HepG2 (cell line): ENCODE measurements at regions of chr19 and their contacts with region 1.

Region 1: GRCh38 chr19:29714953-29715700 is at the start of gene C19orf12:
- DNase-seq: peak; percentile 18
- ATAC-seq: peak; percentile 81
- H3K4me3 ChIP-seq: peak within 1 kb of the TSS; percentile 77 to 96 (median 85)
- H3K27ac ChIP-seq: peak within 1 kb of the TSS; percentile 87
- H3K4me1 ChIP-seq: peaks cover 54% of the 10 kb centered on the region
- H3K27me3 ChIP-seq: no peaks in the 10 kb centered on the region
- CTCF ChIP-seq: no peak
- EP300 ChIP-seq: no peak
- POLR2A ChIP-seq: peak; percentile 70 to 80
- RAD21 ChIP-seq: no peak
- total RNA-seq, gene C19orf12: 34.4 and 34.8 TPM in 2 replicates

Region 2: GRCh38 chr19:29704562-29705558 is 10.3 kb before region 1 on chr19:
- CTCF ChIA-PET with region 1: no interaction called
- POLR2A ChIA-PET with region 1: interaction called, 8 read pairs
- in situ Hi-C with region 1: no loop called
- intact Hi-C with region 1: loop called (anchors 1 kb)
- DNase-seq: no peak
- ATAC-seq: no peak
- H3K4me3 ChIP-seq: no peak overlapping the region
- H3K27ac ChIP-seq: no peak overlapping the region
- H3K4me1 ChIP-seq: peaks cover 40% of the 10 kb centered on the region
- H3K27me3 ChIP-seq: no peaks in the 10 kb centered on the region; a peak in 1 of 5 replicates
- CTCF ChIP-seq: no peak
- EP300 ChIP-seq: no peak
- POLR2A ChIP-seq: no peak
- RAD21 ChIP-seq: no peak

Region 3: GRCh38 chr19:29771708-29772414 is 56.7 kb after region 1 on chr19:
- CTCF ChIA-PET with region 1: no interaction called
- POLR2A ChIA-PET with region 1: no interaction called
- in situ Hi-C with region 1: no loop called
- intact Hi-C with region 1: no loop called
- DNase-seq: peak; percentile 41
- ATAC-seq: peak; percentile 94
- H3K4me3 ChIP-seq: no peak overlapping the region
- H3K27ac ChIP-seq: no peak overlapping the region
- H3K4me1 ChIP-seq: no peaks in the 10 kb centered on the region
- H3K27me3 ChIP-seq: peaks cover 2 to 14% of the 10 kb centered on the region in 2 experiments; a peak in 4 of 5 replicates
- CTCF ChIP-seq: peak; percentile 83
- EP300 ChIP-seq: no peak
- POLR2A ChIP-seq: no peak
- RAD21 ChIP-seq: peak; percentile 60